ENCODE measurements at regions of chr3 and their contacts with region 1.

Region 1: DNA sequence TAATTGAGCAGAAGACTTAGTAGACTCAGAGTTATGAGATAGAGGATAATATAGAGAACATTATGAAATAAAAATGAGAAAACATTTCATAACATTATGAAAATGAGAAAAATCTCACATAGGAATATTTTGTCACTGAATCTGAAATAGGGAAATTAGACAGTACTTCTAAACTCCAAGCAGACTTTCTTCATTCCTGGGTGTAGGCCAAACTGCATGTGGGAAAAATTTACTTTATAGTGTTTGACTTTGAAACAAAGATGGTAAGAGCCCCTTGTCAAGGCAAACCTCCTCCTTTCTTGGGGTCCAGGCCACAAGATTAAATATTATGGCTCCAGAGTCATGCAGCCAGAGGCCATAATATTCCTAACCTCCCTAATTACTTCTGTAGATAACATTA is 6.7 kb upstream of the OR5H14 start:
- DNase-seq: no peak
- ATAC-seq: no peak
- H3K4me3 Mint-ChIP-seq: no peak overlapping the region
- H3K27ac Mint-ChIP-seq: no peak overlapping the region
- H3K4me1 Mint-ChIP-seq: no peaks in the 10 kb centered on the region
- H3K27me3 Mint-ChIP-seq: no peaks in the 10 kb centered on the region
- CTCF ChIP-seq: no peak

Region 2: GRCh38 chr3:98188545-98188944 is 48.0 kb after region 1 on chr3:
- CTCF ChIA-PET with region 1: no interaction called
- POLR2A ChIA-PET with region 1: no interaction called
- intact Hi-C with region 1: loop called (anchors 1 kb)
- DNase-seq: no peak
- ATAC-seq: no peak
- H3K4me3 Mint-ChIP-seq: no peak overlapping the region
- H3K27ac Mint-ChIP-seq: no peak overlapping the region
- H3K4me1 Mint-ChIP-seq: peaks cover 3% of the 10 kb centered on the region
- H3K27me3 Mint-ChIP-seq: peaks cover 2% of the 10 kb centered on the region
- CTCF ChIP-seq: no peak